ENCODE measurements at regions of chr22 and their contacts with region 1.

Region 1: DNA sequence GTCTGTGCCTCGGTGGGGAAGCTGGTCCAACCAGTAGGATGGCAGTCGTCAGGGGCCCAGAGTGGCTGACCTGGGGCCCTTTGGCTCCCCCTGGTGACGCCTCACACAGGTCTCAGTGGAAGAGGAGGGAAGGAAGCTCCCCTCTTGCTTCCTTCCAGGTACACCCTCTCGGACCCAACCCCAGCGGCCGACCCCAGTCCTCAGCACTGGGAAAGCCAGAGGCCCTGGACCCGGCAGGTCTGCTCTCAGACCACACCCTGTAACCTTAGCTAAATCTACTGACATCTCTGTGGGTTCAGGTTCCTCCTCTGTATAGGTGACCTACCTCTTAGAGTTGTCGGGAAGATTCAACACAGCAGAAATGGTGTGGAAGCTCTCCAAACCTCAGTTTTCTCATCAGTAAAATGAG is 3.4 kb upstream of the SCUBE1 start:
- DNase-seq: no peak
- H3K4me3 ChIP-seq: no peak overlapping the region
- CTCF ChIP-seq: peak; percentile 70

Region 2: DNA sequence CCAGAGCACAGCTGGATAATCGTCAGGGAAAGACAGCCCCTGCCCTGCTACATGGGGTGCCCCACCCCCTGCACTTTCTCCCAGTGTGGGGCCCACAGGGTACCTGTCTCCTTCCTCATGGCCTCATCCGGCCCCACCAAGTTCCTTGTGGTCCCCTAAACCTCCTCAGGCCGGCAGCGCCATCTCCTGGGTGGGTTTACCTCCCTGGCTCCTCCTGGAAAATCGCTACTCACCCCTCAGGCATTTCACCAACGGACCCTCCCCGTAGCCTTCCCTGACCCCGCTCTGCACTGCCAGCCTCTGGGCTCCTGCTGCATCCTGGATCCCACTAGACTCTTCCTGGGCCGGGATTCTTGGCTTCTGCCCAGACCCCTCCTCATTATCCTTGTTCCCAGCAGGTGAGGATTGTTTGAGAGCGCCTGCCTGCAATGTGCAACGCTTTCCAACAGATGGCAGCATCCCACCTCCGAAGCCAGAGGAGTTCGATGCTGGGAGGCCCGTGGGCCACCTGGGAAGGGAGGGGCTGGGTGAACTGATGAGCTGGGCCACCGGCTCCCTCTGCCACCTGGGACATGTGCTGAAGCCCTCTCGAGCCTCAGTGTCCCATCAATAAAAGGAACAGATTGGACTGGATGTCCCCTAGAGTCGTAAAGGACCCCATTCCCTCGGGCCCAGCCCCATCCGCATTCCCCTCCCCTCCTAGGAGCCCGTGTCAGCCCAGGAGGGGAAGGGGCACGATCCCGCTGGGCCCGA is 115.4 kb before region 1 on chr22:
- CTCF ChIA-PET with region 1: interaction called, 50 read pairs
- POLR2A ChIA-PET with region 1: no interaction called
- DNase-seq: no peak
- H3K4me3 ChIP-seq: no peak overlapping the region
- CTCF ChIP-seq: peak; percentile 92

Region 3: DNA sequence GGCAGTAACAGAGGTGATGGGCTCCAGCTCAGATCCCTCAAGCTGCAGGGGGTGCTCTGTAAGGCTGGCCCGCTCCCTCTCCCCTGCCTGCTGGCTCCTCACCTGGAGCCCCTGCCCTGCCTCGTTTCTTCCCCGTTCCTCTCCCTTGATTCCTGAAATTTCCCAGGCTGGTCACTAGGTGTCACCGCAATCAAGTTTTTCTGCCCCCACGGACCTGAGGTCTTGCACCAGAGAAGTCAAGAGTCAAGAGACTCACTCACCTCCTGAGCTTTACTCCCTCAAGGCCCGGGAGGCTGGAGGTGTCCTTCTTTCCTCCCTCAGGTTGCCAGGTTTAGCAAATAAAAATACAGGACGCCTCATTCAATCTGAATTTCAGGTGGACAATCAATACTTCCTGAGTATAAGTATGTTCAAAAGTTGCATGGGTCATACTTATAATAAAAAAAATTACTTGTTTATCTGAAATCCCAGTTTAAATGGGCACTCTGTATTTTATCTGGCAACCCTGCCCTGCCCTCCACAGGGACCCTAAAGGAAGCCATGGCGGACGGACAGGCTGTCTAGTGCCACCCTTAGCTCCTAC is 72.5 kb before region 1 on chr22:
- CTCF ChIA-PET with region 1: interaction called, 80 read pairs
- POLR2A ChIA-PET with region 1: no interaction called
- DNase-seq: no peak
- H3K4me3 ChIP-seq: no peak overlapping the region
- CTCF ChIP-seq: peak; percentile 67

Region 4: DNA sequence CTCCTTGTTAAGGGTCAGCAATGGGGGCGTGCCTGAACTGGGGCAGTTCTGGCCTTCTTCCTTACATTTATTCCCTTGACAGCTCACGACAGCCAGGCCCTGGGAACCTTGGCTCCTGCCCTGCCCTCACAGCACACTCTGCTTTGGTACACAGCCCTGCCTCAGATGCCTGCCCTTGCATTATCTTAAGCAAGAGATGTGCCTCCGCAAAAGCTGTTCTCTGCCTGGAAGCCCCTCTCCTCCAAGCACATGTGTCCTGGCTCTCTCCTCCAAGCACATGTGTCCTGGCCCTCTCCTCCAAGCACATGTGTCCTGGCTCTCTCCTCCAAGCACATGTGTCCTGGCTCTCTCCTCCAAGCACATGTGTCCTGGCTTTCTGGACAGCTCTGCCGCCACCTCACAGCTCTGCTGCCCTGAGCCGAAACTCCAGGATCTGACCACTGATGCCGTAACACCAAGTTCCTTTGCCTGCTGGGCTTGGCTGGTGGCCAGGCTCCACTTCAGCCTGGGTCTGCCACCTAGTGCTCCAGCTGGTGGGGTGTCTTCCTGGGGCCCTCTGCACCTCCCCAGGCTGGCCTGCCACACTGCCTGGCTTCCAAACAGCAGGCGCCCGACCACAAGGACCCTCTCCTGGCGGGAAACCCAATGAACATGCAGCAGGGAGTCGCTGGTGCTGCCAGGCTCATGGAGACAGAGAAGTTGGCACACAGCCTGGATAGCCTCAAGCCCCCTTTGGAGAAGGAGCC is 56.4 kb before region 1 on chr22:
- CTCF ChIA-PET with region 1: interaction called, 12 read pairs
- POLR2A ChIA-PET with region 1: no interaction called
- DNase-seq: no peak
- H3K4me3 ChIP-seq: no peak overlapping the region
- CTCF ChIP-seq: no peak

Measured in AG04449 (cell line).